Activated CD8-positive, alpha-beta T cell treated with anti-CD3 and anti-CD28 coated beads for 36 hours (primary cell): ENCODE measurements at regions of chr5 and their contacts with region 1.

Region 1: GRCh38 chr5:159156426-159157238 is 52.7 kb downstream of the RNF145 start:
- DNase-seq: peak; percentile 32
- ATAC-seq: peak; percentile 72
- H3K4me3 Mint-ChIP-seq: no peak overlapping the region
- H3K27ac Mint-ChIP-seq: peak overlapping the region; percentile 63
- H3K4me1 Mint-ChIP-seq: peaks cover 42% of the 10 kb centered on the region
- H3K27me3 Mint-ChIP-seq: no peaks in the 10 kb centered on the region
- CTCF ChIP-seq: peak; percentile 95

Region 2: DNA sequence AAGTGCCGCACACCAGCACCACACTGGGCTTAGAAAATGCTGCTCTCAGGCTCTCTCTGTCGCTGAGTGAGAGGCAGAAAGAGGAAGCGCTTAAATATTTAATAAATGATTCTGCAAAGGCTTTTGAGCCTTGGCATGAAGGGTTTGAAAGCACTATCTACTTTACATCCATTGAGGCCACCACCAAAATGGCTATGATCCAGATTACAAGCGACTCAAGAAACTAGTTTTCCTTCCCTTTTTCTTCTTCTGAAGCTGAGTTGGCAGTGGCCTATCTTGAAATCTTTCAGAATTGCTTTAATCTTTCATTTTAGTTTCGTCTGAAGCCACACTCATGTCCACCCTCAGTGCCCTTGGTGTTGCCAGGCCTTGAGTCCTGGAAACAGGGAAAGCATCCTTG is 116.5 kb before region 1 on chr5:
- CTCF ChIA-PET with region 1: no interaction called
- POLR2A ChIA-PET with region 1: no interaction called
- intact Hi-C with region 1: no loop called
- DNase-seq: no peak
- ATAC-seq: no peak
- H3K4me3 Mint-ChIP-seq: no peak overlapping the region
- H3K27ac Mint-ChIP-seq: no peak overlapping the region
- H3K4me1 Mint-ChIP-seq: no peaks in the 10 kb centered on the region
- H3K27me3 Mint-ChIP-seq: peaks cover 13% of the 10 kb centered on the region
- CTCF ChIP-seq: no peak

Region 3: DNA sequence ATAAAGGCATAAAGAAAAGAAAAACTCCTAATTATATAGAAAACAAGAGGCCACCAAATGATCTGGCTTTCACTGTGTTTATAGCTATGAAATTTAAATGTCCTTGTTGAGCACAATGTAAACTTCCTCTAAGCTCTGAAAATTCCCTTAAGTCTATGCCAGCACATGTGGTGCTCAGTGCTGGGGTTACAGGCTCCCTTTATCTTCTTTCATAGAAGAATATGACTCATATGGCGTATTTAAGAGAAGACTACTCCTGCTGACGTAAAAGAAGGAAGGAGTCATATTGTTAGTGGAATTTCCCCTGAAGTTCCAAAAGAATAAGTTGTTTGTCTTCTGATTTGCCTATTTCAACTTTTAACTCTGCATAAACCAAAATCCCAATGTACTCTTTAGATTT is 22.3 kb after region 1 on chr5:
- CTCF ChIA-PET with region 1: interaction called, 12 read pairs
- POLR2A ChIA-PET with region 1: interaction called, 3 read pairs
- intact Hi-C with region 1: no loop called
- DNase-seq: peak; percentile 57
- ATAC-seq: peak; percentile 89
- H3K4me3 Mint-ChIP-seq: peak overlapping the region; percentile 26
- H3K27ac Mint-ChIP-seq: peak overlapping the region; percentile 87
- H3K4me1 Mint-ChIP-seq: peaks cover 80% of the 10 kb centered on the region
- H3K27me3 Mint-ChIP-seq: no peaks in the 10 kb centered on the region
- CTCF ChIP-seq: no peak

Region 4: DNA sequence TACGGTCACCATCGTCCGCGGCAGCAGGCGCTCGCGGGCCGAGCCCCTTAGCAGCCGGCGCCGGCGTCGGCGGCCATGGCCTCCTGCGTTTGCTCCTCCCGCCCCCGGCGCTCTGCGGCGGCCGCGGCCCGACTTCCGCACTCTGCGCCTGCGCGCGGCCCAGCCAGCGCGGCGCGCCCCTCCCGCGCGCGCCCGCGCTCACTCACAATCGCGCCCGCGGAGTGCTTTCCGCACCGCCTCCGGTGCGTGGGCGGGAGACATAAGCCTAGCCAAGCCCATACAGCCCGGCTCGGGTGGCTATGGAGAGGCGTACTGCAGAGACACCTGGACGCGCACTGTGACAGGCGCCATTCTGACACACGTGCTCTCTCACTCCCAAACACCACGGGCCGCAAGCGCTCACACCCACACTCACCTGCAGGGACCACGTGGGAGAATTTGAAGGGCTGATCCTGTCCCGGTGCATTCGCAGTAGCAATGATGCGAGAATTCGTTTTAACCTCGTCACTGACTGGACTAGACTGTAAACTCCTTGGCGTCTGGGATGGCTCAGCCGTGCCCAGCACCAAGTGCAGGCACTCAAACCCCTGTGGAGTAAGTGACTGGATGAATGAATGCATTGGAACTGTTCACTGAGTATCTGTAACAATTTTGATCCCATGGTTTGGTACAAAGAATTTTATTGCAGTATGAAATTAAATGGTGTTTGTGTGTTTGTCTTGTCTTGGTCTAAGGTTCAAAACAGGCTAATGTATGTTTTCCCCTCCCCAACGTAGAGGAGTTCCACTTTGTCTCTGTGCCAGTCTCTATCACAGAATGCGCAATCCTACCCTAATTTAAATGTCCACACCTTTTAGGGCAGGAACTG is 53.0 kb after region 1 on chr5 and contains the start of gene RNF145:
- CTCF ChIA-PET with region 1: interaction called, 14 read pairs
- POLR2A ChIA-PET with region 1: no interaction called
- intact Hi-C with region 1: loop called (anchors 5 kb)
- DNase-seq: peak; percentile 97
- ATAC-seq: peak; percentile 74
- H3K4me3 Mint-ChIP-seq: peak within 1 kb of the TSS; percentile 100
- H3K27ac Mint-ChIP-seq: peak within 1 kb of the TSS; percentile 100
- H3K4me1 Mint-ChIP-seq: peaks cover 37% of the 10 kb centered on the region
- H3K27me3 Mint-ChIP-seq: no peaks in the 10 kb centered on the region
- CTCF ChIP-seq: no peak
- total RNA-seq, gene RNF145: 77.5 to 87.5 TPM

Region 5: DNA sequence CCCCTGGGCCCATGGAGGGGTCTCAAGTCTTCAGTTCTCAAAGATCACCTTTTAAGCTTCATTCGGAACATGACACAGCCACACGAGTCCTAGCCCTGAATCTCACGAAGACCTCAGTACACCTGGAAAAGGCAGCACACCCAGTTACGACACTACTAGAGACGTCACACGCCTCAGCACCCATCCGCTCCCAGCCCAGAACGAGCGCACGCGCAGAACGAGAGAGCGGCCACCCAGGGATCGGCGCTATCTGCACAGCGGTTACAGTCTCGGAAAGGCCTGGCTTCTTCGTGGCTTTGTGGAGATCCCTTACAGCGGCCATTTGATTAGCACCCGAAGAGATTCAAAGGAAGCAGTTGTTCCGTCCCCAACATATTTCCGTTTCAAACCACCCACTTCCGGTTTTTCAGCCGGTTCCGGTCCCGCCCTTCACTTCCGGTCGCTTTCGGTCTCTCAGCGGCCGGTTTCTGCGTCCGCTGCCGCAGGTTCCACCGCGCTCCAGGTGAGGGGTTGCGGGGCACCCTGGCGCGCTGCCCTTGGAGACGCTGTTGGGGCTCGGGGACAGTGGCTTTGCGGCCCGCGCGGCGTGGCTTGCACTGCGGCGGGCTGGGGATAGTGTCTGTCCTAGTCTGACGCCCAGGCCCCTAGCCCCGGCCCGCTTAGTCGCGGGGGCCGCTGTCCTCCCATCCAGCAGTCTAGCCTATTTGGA is 106.4 kb after region 1 on chr5 and contains the start of gene UBLCP1:
- CTCF ChIA-PET with region 1: interaction called, 10 read pairs
- POLR2A ChIA-PET with region 1: no interaction called
- intact Hi-C with region 1: loop called (anchors 5 kb)
- DNase-seq: peak; percentile 84
- ATAC-seq: peak; percentile 89
- H3K4me3 Mint-ChIP-seq: peak within 1 kb of the TSS; percentile 92
- H3K27ac Mint-ChIP-seq: peak within 1 kb of the TSS; percentile 99
- H3K4me1 Mint-ChIP-seq: peaks cover 40% of the 10 kb centered on the region
- H3K27me3 Mint-ChIP-seq: no peaks in the 10 kb centered on the region
- CTCF ChIP-seq: no peak
- total RNA-seq, gene UBLCP1: 30.6 to 31.6 TPM

Region 6: DNA sequence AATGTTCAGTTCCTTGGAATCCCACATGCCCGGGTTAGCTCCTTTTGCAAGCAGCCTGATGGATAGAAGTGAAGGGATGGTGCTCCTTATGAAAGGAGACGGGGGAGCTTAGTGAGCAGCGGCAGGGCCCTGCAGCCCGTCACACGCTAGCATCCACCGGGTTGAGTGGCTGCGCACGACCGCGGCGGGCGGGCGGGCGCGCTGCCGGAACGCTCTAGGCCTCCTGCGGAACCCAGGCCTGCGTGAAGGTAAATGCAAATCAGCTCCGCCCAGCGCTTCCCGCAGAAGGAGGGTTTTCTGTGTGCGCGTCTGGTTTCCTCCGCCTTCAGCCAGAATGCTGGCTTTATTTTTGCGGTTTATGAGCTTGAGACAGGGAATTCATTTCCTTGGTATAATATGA is 153.9 kb after region 1 on chr5:
- CTCF ChIA-PET with region 1: interaction called, 66 read pairs
- POLR2A ChIA-PET with region 1: no interaction called
- intact Hi-C with region 1: no loop called
- DNase-seq: peak; percentile 37
- ATAC-seq: peak; percentile 66
- H3K4me3 Mint-ChIP-seq: no peak overlapping the region
- H3K27ac Mint-ChIP-seq: no peak overlapping the region
- H3K4me1 Mint-ChIP-seq: peaks cover 3% of the 10 kb centered on the region
- H3K27me3 Mint-ChIP-seq: peaks cover 17% of the 10 kb centered on the region
- CTCF ChIP-seq: no peak